ENCODE measurements at regions of chr12 and their contacts with region 1.

Region 1: DNA sequence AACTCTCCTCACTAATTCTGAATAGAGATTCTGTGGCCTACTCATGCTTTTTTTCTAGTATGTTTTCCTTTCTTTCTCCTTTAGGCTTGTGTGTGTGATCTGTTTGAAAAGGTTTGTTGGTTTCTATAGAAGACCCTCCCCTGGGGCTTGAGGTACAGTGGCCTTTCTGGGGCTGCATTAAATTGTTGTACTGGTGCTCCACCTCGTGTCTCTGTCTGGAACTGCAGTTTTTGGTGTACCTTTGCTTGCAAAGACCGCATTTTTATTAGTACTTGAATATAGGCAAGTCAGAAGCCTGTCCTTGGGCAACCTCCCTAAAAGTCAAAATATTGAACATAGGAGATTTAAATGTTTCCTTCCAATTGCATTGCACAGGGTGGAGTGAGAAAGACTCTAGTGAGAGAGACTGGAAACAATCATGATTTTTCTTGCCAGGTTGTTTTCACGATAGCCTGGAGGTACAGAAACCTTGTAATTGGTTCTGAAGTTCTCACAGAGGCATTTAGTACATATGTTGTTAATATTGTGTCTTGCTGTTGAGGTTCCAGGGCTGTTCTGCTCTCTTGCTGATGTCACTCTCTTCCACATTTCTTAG is 39.0 kb downstream of the SLCO1B1 start:
- DNase-seq: peak; percentile 68
- H3K4me3 Mint-ChIP-seq: no peak overlapping the region
- H3K27ac Mint-ChIP-seq: no peak overlapping the region
- H3K4me1 Mint-ChIP-seq: no peaks in the 10 kb centered on the region
- H3K27me3 Mint-ChIP-seq: no peaks in the 10 kb centered on the region
- CTCF ChIP-seq: peak; percentile 76

Region 2: GRCh38 chr12:20646239-20646827 is 523.6 kb before region 1 on chr12:
- CTCF ChIA-PET with region 1: no interaction called
- intact Hi-C with region 1: loop called (anchors 1 kb)
- DNase-seq: no peak
- H3K4me3 Mint-ChIP-seq: no peak overlapping the region
- H3K27ac Mint-ChIP-seq: no peak overlapping the region
- H3K4me1 Mint-ChIP-seq: no peaks in the 10 kb centered on the region
- H3K27me3 Mint-ChIP-seq: no peaks in the 10 kb centered on the region
- CTCF ChIP-seq: peak; percentile 50

Region 3: DNA sequence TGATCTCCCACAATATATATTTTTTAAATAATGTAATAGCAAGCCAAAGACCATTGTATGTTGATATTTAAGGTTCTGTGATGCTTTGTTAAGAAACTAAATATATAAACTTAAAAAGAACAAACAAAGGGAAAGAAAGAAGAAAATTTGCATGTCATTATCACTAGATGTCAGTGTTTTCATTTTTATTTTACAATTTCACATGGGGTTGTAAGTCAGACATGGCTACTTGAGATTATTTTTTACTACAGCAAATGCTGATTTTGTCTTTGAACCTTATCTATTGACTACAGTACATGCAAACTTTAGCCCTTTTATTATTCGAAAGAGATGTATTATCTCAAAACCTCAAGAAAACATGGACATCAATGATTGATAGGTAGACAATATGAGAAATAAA is 438.7 kb before region 1 on chr12:
- CTCF ChIA-PET with region 1: no interaction called
- intact Hi-C with region 1: loop called (anchors 1 kb)
- DNase-seq: no peak
- H3K4me3 Mint-ChIP-seq: no peak overlapping the region
- H3K27ac Mint-ChIP-seq: no peak overlapping the region
- H3K4me1 Mint-ChIP-seq: no peaks in the 10 kb centered on the region
- H3K27me3 Mint-ChIP-seq: no peaks in the 10 kb centered on the region
- CTCF ChIP-seq: no peak

Region 4: GRCh38 chr12:21065845-21066244 is 104.1 kb before region 1 on chr12:
- CTCF ChIA-PET with region 1: no interaction called
- intact Hi-C with region 1: loop called (anchors 10 kb)
- DNase-seq: peak; percentile 16
- H3K4me3 Mint-ChIP-seq: no peak overlapping the region
- H3K27ac Mint-ChIP-seq: no peak overlapping the region
- H3K4me1 Mint-ChIP-seq: no peaks in the 10 kb centered on the region
- H3K27me3 Mint-ChIP-seq: no peaks in the 10 kb centered on the region
- CTCF ChIP-seq: no peak